Activated CD4-positive, alpha-beta T cell treated with anti-CD3 and anti-CD28 coated beads, Interleukin-2, amount 10 ng/mL, durations not matched to agents 24 days and 14 days (primary cell): ENCODE measurements at regions of chr21 and their contacts with region 1.

Region 1: DNA sequence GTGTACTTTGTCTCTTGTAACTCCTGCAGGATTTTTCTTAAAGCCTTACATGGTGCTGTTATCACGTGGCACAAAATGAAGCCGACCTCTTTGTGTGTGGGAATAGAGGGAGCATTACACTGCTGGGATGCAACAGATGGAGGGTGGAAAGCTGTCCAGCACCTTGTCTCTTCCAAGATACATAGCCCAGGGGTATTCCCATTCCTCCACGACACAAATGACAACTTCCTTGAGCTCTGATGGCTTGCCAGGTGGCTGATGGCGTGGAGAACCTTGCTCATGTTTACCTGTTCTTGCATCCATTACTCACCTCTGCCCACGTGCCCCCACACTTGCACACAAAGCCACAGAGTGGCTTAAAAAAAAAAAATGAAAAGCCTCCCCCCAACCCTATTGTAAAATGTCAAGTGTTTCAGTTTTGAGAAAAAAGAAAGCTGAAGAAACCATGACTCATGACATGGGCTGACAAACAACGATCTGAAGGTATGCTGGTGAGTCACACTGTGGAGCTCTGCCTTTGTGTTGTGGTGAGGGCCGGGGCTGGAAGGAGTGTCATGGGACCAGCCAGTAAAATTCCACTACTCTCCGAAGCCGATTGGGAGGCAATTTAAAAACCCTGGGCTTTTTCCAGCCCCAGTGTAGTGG is 32.0 kb upstream of the ATP5PO start:
- DNase-seq: peak; percentile 95
- H3K4me3 Mint-ChIP-seq: peak overlapping the region; percentile 80
- H3K27ac Mint-ChIP-seq: peak overlapping the region; percentile 100
- H3K4me1 Mint-ChIP-seq: peaks cover 70% of the 10 kb centered on the region
- H3K27me3 Mint-ChIP-seq: peaks cover 3% of the 10 kb centered on the region

Region 2: DNA sequence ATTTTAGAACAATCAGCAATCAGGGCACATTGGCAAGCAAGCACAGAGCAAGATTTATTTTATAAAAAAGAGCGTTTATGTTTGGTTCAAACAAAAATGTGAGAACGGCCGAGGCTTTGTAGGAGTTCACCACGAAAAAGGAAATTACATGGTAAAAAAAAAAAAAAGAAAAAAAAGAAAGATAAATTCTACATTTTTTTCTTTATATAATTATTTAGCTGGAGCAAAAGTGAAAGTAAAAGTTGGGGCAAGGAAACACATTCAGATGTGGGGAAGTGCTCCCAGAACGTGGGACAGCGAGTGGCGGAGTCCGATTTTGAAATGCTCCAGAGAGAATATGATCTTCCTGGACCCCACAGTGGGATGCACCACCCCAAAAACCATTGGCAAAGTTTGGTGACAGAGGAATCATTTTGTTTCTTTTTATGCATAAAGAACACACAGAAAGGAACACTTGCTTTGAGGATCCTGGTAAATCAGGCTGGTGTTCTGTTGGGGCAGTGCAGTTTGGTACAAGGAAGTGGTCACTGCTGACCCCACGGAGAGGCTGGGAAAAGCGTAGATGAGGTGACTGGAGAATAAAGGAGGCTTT is 15.7 kb before region 1 on chr21:
- intact Hi-C with region 1: loop called (anchors 1 kb)
- DNase-seq: peak; percentile 80
- H3K4me3 Mint-ChIP-seq: peak overlapping the region; percentile 94
- H3K27ac Mint-ChIP-seq: peak overlapping the region; percentile 99
- H3K4me1 Mint-ChIP-seq: peaks cover 42% of the 10 kb centered on the region
- H3K27me3 Mint-ChIP-seq: no peaks in the 10 kb centered on the region

Region 3: DNA sequence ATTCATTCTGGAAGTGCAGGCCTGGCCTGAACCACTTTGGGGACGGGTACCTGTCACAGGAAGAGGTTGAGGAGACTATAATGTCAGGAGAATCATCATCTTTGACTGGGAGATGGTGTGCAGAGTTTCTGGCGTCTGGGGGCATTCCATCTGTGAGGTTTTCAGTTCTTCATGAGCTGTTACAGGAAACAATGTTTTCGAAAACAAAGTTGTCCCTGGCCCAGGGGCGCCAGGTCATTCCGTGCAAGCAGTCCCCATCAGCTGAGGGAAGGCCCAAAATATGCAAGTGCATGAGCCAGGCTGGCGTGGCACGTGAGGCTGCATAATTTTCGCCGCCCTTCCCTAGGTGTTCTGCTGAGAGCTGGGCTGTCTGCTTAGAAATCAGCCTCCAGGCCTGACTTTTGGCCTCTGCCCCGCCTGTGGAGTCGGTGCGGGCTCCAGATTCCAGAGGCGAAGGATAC is 36.5 kb after region 1 on chr21:
- intact Hi-C with region 1: no loop called
- DNase-seq: no peak
- H3K4me3 Mint-ChIP-seq: no peak overlapping the region
- H3K27ac Mint-ChIP-seq: no peak overlapping the region
- H3K4me1 Mint-ChIP-seq: peaks cover 41% of the 10 kb centered on the region
- H3K27me3 Mint-ChIP-seq: no peaks in the 10 kb centered on the region

Region 4: GRCh38 chr21:34008618-34009017 is 61.0 kb after region 1 on chr21:
- intact Hi-C with region 1: loop called (anchors 1 kb)
- DNase-seq: no peak
- H3K4me3 Mint-ChIP-seq: no peak overlapping the region
- H3K27ac Mint-ChIP-seq: no peak overlapping the region
- H3K4me1 Mint-ChIP-seq: peaks cover 14% of the 10 kb centered on the region
- H3K27me3 Mint-ChIP-seq: no peaks in the 10 kb centered on the region

Region 5: DNA sequence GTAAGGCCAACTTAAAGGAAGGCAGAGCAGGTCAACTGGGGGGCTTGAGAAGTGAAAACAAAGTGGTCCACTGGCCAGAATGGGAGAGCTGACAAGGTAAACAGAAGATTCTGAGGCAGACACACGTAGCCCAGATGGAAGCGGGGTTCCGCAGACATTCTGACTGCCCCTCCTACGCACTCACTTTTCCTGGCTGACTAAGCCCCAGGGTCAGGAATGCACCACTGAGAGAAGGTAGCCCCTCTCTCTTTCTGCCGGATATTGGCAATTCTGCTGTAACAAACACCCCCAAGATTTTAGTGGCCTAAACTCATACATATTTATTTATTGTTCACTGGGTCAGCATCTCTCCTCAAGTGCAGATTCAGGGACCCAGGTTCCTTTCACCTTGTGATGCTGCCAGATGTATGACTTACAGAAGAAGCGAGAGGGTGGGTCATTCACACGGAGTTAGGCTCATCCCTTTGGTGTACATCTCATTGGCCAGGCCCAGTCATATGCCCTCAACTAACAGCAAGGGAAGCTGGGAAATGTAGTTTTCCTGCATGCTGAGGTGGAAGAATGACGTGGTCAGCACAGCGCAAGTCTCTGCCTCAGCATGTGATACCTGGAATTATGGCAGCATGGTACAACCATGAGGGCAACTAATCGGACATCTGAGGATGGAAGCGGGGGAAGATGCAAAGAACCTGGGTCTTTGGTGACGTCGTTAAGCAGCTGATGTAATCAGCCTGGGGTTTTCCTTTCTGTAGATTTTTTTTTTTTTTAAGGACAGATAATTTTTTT is 82.4 kb after region 1 on chr21:
- intact Hi-C with region 1: loop called (anchors 1 kb)
- DNase-seq: peak; percentile 82
- H3K4me3 Mint-ChIP-seq: peak overlapping the region; percentile 3
- H3K27ac Mint-ChIP-seq: peak overlapping the region; percentile 54
- H3K4me1 Mint-ChIP-seq: peaks cover 23% of the 10 kb centered on the region
- H3K27me3 Mint-ChIP-seq: no peaks in the 10 kb centered on the region

Region 6: GRCh38 chr21:34202553-34203372 is 255.2 kb after region 1 on chr21:
- intact Hi-C with region 1: loop called (anchors 2 kb)
- DNase-seq: no peak
- H3K4me3 Mint-ChIP-seq: peak overlapping the region; percentile 85
- H3K27ac Mint-ChIP-seq: peak overlapping the region; percentile 87
- H3K4me1 Mint-ChIP-seq: peaks cover 62% of the 10 kb centered on the region
- H3K27me3 Mint-ChIP-seq: no peaks in the 10 kb centered on the region